Calu3 (cell line): ENCODE measurements at regions of chr11 and their contacts with region 1.

Region 1: GRCh38 chr11:94417386-94417987 is 16.3 kb upstream of the GPR83 start:
- DNase-seq: no peak
- H3K4me3 Mint-ChIP-seq: no peak overlapping the region
- H3K27ac Mint-ChIP-seq: no peak overlapping the region
- H3K4me1 Mint-ChIP-seq: no peaks in the 10 kb centered on the region
- H3K27me3 Mint-ChIP-seq: no peaks in the 10 kb centered on the region
- CTCF ChIP-seq: no peak

Region 2: GRCh38 chr11:93895106-93895862 is 522.2 kb before region 1 on chr11:
- CTCF ChIA-PET with region 1: interaction called, 16 read pairs
- intact Hi-C with region 1: loop called (anchors 2 kb)
- DNase-seq: peak; percentile 32
- H3K4me3 Mint-ChIP-seq: no peak overlapping the region
- H3K27ac Mint-ChIP-seq: no peak overlapping the region
- H3K4me1 Mint-ChIP-seq: no peaks in the 10 kb centered on the region
- H3K27me3 Mint-ChIP-seq: peaks cover 37% of the 10 kb centered on the region
- CTCF ChIP-seq: no peak

Region 3: DNA sequence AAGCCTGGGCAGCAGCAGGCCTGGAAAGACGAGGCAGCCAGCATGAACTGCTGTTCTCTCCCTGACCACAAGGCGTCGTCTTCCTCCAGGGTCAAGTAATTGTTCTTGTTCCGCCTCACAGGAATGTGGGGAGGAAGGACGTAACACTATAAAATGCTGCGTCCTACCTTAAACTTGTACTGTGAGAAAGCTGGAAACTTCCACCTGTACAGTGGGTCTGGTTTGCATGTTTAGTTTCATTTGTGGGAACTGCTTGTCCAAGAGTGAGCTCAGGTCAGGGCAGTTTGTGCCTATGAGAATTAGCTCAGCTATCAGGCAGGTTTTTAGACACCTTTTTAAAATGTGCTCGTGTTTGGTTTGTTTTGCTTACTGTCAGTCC is 233.6 kb before region 1 on chr11:
- CTCF ChIA-PET with region 1: no interaction called
- intact Hi-C with region 1: loop called (anchors 5 kb)
- DNase-seq: peak; percentile 69
- H3K4me3 Mint-ChIP-seq: no peak overlapping the region
- H3K27ac Mint-ChIP-seq: no peak overlapping the region
- H3K4me1 Mint-ChIP-seq: no peaks in the 10 kb centered on the region
- H3K27me3 Mint-ChIP-seq: no peaks in the 10 kb centered on the region
- CTCF ChIP-seq: peak; percentile 65